ENCODE measurements at regions of chr5 and their contacts with region 1.

Region 1: DNA sequence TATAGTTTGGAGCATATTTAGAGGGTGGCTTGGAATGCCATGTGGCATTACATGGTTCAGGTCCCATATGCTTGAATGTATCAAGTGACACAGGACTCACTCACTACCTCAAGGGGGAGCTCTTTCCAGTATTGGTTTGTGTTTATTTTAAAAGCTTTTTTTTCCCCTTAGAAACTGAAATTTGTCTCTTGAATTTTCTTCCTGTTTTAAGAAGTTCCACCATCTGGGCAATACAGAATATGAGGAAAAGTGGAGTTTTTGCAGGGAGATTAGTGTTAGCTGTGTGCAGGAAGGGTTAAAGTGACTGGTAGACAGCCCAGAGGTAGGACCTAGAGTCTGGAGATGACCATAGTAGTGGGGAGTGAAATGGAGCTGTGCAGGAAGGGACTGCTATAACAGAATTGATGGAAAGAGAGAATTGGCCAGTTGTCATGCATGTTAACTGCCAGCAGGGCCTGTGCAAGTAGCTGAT is 36.6 kb downstream of the CTNNA1 start:
- DNase-seq: no peak
- H3K4me3 ChIP-seq: no peak overlapping the region
- H3K27ac ChIP-seq: no peak overlapping the region
- H3K4me1 ChIP-seq: peaks cover 0 to 4% (median 0%) of the 10 kb centered on the region in 4 experiments; a peak in 2 of 7 replicates
- H3K27me3 ChIP-seq: no peaks in the 10 kb centered on the region
- CTCF ChIP-seq: peak in 2 of 3 experiments; percentile 40 to 73; a peak in 3 of 4 replicates
- EP300 ChIP-seq: no peak
- POLR2A ChIP-seq: no peak
- RAD21 ChIP-seq: peak; percentile 27 to 45; a peak in 3 of 4 replicates

Region 2: GRCh38 chr5:138528208-138528607 is 261.6 kb before region 1 on chr5:
- CTCF ChIA-PET with region 1: no interaction called
- POLR2A ChIA-PET with region 1: no interaction called
- DNase-seq: no peak
- H3K4me3 ChIP-seq: no peak overlapping the region
- H3K27ac ChIP-seq: no peak overlapping the region
- H3K4me1 ChIP-seq: peaks cover 0 to 10% (median 1%) of the 10 kb centered on the region in 4 experiments; a peak in 3 of 7 replicates
- H3K27me3 ChIP-seq: no peaks in the 10 kb centered on the region
- CTCF ChIP-seq: no peak
- EP300 ChIP-seq: no peak
- POLR2A ChIP-seq: no peak
- RAD21 ChIP-seq: no peak

Region 3: GRCh38 chr5:138649316-138649720 is 140.5 kb before region 1 on chr5:
- CTCF ChIA-PET with region 1: interaction called, 12 read pairs
- POLR2A ChIA-PET with region 1: no interaction called
- DNase-seq: no peak
- H3K4me3 ChIP-seq: peak overlapping the region in 1 of 4 experiments; percentile 0; a peak in 1 of 8 replicates
- H3K27ac ChIP-seq: no peak overlapping the region
- H3K4me1 ChIP-seq: peaks cover 4 to 22% (median 11%) of the 10 kb centered on the region in 4 experiments
- H3K27me3 ChIP-seq: no peaks in the 10 kb centered on the region
- CTCF ChIP-seq: no peak
- EP300 ChIP-seq: no peak
- POLR2A ChIP-seq: no peak
- RAD21 ChIP-seq: no peak

Region 4: DNA sequence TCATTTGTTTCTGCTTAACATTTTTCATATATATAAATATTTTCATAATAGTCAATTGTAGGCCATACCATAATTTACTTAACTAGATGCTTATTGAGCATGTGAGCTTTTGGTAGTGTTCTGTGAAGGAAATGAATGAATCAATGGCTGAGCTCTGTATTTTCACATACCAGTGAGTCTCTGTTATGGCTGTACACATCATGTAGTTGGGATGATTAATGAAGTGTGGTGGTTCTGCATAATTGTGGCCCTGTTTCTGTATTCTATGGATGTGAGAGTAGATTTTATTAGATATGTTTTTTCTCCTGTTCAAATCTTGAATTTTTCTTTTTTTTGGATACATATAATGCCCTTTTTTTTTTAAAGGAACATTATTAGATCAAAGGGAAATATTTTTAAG is 19.6 kb after region 1 on chr5:
- CTCF ChIA-PET with region 1: interaction called, 38 read pairs
- POLR2A ChIA-PET with region 1: interaction called, 4 read pairs
- DNase-seq: no peak
- H3K4me3 ChIP-seq: no peak overlapping the region
- H3K27ac ChIP-seq: no peak overlapping the region
- H3K4me1 ChIP-seq: no peaks in the 10 kb centered on the region
- H3K27me3 ChIP-seq: no peaks in the 10 kb centered on the region
- CTCF ChIP-seq: no peak
- EP300 ChIP-seq: no peak
- POLR2A ChIP-seq: no peak
- RAD21 ChIP-seq: no peak

Region 5: GRCh38 chr5:138932171-138932810 is 142.5 kb after region 1 on chr5:
- CTCF ChIA-PET with region 1: interaction called, 11 read pairs
- POLR2A ChIA-PET with region 1: no interaction called
- DNase-seq: no peak
- H3K4me3 ChIP-seq: no peak overlapping the region
- H3K27ac ChIP-seq: no peak overlapping the region
- H3K4me1 ChIP-seq: peaks cover 0 to 14% (median 5%) of the 10 kb centered on the region in 4 experiments; a peak in 5 of 7 replicates
- H3K27me3 ChIP-seq: no peaks in the 10 kb centered on the region
- CTCF ChIP-seq: peak; percentile 77 to 93 (median 86)
- EP300 ChIP-seq: no peak
- POLR2A ChIP-seq: no peak
- RAD21 ChIP-seq: peak; percentile 76 to 86

Region 6: DNA sequence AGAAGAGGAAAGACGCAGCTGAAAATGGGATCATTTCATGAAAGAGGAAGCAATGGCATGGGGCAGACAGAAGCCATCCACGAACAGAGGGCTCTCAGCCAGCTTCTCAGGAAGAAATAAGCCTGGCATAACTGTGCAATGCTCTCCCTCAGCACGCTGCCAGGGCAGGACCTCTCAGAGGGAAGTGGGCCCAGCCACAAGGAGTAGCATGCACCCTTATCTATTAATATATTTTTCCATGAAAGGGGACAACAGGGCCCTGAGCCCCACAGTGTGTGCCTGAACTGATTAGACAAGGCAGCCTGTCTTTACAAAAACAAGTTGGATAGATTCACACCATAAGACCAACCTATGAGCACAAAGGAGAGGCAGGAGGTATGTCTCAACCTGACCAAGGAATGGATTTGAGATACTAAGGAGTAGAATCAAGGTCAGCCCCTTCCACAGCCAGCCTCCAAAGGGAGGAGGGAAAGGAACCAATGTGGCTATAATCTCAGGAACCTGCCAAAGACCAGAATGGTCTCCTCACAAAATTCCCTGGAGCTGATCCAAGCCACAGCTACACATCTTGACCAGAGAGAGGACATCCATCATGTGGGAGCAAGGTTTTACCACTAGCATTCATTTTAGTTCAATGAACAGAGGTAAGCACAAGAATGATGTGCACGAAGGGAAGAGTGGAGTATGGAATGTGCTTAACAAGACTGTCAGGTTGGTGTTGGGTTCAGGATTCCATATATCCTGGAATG is 253.5 kb after region 1 on chr5:
- CTCF ChIA-PET with region 1: no interaction called
- POLR2A ChIA-PET with region 1: no interaction called
- DNase-seq: no peak
- H3K4me3 ChIP-seq: no peak overlapping the region
- H3K27ac ChIP-seq: no peak overlapping the region
- H3K4me1 ChIP-seq: no peaks in the 10 kb centered on the region
- H3K27me3 ChIP-seq: no peaks in the 10 kb centered on the region
- CTCF ChIP-seq: no peak
- EP300 ChIP-seq: no peak
- POLR2A ChIP-seq: no peak
- RAD21 ChIP-seq: no peak